Dendritic cell treated with granulocyte-macrophage colony-stimulating factor and Interleukin-4, amounts not matched to agents 40 ng/mL and 50 ng/mL, for 4 days (primary cell): ENCODE measurements at regions of chr6 and their contacts with region 1.

Region 1: DNA sequence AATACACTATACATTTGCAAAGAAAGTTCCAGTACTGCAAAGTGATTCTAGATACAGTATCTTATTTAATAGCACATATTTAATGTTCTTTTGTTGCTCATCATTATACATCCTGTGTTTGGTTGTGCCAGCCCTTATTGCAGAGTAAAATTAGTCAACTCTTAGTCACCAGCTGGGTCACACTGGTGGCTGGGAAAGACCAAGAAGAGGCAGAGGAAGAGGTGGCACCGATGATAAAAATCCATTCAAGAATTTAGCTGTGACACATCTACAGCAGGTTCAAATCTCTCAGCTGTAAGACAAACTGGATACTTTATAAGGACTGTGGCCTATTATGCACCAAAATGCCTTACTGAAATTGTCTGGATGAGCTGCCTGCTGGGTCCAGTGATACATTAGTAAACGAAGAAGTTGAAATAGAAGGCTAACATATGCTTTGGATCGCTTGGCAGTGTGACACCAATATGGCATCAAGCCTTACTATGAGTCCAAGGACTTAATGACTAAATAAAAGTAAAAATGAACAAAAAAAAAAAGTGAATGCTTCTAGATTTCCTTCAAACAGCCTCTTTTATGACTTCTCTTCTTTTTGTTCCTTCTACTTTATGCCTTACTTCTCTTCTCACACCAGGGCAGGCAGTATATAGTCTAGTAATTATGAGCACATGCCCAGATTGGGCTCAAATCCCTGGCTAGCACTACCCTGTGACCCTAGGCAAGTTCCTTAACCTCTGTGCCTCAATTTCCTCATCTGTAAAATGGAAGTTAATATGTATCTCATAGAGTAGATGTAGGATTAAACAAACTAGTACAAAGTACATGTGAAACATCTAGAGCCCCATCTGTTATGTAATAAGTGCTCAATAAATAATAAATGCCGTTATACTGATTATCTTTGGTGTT is 29.4 kb upstream of the RNF8 start:
- H3K4me3 Mint-ChIP-seq: no peak overlapping the region
- H3K27ac Mint-ChIP-seq: no peak overlapping the region
- H3K4me1 Mint-ChIP-seq: peaks cover 7% of the 10 kb centered on the region
- H3K27me3 Mint-ChIP-seq: no peaks in the 10 kb centered on the region

Region 2: DNA sequence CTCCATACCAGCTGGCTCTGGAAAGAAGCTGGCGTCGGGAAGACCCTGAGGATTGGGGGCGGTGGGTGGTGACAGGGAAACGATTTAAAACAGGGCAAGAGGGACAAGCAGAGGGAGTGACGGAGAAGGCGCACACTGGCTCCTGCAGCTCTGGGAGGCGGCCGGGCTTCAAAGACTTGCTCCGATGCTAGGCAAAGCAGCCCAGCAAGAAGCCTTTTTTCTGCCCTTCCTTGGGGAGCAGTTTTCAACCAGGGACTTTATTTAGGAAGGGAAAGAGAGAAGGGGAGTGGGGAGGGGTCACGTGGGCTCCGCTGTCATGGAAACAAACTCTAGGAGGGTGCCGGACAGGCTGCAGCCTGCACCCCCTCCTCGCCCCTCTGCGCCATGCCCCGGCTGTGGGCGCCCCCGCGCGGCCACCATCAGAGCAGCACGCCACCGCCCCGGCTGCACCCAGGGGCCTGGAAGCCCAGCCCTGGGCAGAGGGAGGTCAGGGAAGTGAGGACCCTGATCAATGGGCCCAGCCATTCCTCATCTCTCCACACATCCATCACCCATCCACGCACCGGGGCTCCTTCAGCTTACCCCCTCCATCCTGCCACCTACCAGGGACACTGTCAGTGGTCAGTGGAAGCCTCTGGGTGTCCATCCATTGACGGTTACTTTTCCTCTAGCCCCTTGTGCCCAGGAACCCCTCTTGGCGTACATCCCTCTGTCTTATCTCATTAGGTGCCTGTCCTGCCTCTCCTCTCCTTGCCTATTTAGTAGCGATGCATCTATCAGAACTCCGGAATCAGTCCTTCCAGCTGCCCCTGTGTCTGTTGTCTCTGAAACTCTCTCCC is 241.9 kb after region 1 on chr6:
- intact Hi-C with region 1: loop called (anchors 5 kb)
- H3K4me3 Mint-ChIP-seq: no peak overlapping the region
- H3K27ac Mint-ChIP-seq: no peak overlapping the region
- H3K4me1 Mint-ChIP-seq: peaks cover 5% of the 10 kb centered on the region
- H3K27me3 Mint-ChIP-seq: peaks cover 58% of the 10 kb centered on the region

Region 3: GRCh38 chr6:37691904-37692806 is 367.8 kb after region 1 on chr6:
- intact Hi-C with region 1: loop called (anchors 2 kb)
- H3K4me3 Mint-ChIP-seq: no peak overlapping the region
- H3K27ac Mint-ChIP-seq: no peak overlapping the region
- H3K4me1 Mint-ChIP-seq: peaks cover 19% of the 10 kb centered on the region
- H3K27me3 Mint-ChIP-seq: peaks cover 72% of the 10 kb centered on the region